ENCODE measurements at regions of chr10 and their contacts with region 1.

Region 1: DNA sequence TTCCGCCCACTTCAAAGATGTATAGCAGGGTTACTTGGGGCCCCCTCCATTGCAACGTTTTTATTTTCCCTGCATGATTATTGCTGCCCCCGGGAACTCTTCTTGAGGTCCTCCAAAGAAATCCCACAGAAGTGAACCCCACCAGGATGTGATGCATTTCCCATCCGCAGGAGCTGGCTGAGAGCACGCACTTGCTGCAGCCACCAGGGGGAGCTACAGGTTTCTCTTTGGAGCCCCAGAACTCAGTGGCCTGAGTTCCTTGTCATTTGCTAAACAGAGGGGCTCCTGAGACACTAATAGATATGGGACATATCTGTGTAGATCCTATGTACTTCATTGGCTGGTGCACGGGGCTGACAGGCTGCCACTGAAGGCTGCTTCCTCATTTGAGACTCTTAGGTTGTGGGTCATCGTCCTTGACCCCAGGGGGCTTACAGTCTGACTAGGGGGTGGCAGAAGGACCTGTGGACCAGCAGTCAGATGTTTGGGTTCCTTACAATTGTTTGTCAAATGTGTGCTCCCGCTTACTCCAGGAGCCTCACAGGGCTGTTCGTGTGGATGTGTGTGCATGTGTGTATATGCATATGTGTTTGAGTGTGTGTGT is 52.3 kb upstream of the ENO4 start:
- DNase-seq: peak; percentile 76
- H3K4me3 ChIP-seq: no peak overlapping the region
- H3K27ac ChIP-seq: no peak overlapping the region
- H3K4me1 ChIP-seq: no peaks in the 10 kb centered on the region
- H3K27me3 ChIP-seq: no peaks in the 10 kb centered on the region
- CTCF ChIP-seq: peak; percentile 91

Region 2: GRCh38 chr10:116417821-116418220 is 379.2 kb before region 1 on chr10:
- intact Hi-C with region 1: no loop called
- DNase-seq: no peak
- H3K4me3 ChIP-seq: no peak overlapping the region
- H3K27ac ChIP-seq: no peak overlapping the region
- H3K4me1 ChIP-seq: no peaks in the 10 kb centered on the region
- H3K27me3 ChIP-seq: no peaks in the 10 kb centered on the region
- CTCF ChIP-seq: no peak

Region 3: DNA sequence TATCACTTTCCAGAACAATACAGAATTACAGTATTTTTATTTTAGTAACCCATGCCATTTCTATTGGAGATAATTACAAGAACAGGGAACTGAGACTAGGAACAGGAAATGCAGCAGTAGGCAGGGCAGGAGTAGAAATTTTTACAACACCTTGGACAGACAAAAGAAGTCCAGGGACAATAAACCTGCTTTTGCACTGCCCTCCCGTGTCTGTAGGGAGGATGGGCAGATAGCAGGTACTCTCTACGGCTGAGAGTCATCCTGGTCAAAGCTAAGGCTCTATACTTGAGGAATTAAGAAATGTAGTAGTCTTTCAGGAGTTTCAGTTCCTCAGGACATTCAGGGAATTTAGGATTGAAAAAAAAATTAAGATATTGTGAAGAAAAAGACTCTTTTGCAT is 277.6 kb after region 1 on chr10:
- intact Hi-C with region 1: loop called (anchors 5 kb)
- DNase-seq: peak; percentile 31
- H3K4me3 ChIP-seq: no peak overlapping the region
- H3K27ac ChIP-seq: no peak overlapping the region
- H3K4me1 ChIP-seq: no peaks in the 10 kb centered on the region
- H3K27me3 ChIP-seq: no peaks in the 10 kb centered on the region
- CTCF ChIP-seq: peak; percentile 21

Region 4: GRCh38 chr10:117174439-117175214 is 377.6 kb after region 1 on chr10:
- intact Hi-C with region 1: loop called (anchors 2 kb)
- DNase-seq: peak; percentile 93
- H3K4me3 ChIP-seq: peak overlapping the region; percentile 50
- H3K27ac ChIP-seq: no peak overlapping the region
- H3K4me1 ChIP-seq: peaks cover 5% of the 10 kb centered on the region
- H3K27me3 ChIP-seq: peaks cover 10% of the 10 kb centered on the region
- CTCF ChIP-seq: peak; percentile 87

Measured in colonic mucosa (tissue), 4 donors.